Esophagus squamous epithelium (tissue), 5 donors: ENCODE measurements at regions of chr6 and their contacts with region 1.

Region 1: GRCh38 chr6:148947621-148948444 is 201.0 kb downstream of the UST start:
- DNase-seq: no peak
- H3K4me3 ChIP-seq: no peak overlapping the region
- H3K27ac ChIP-seq: no peak overlapping the region
- H3K4me1 ChIP-seq: peaks cover 0 to 23% (median 3%) of the 10 kb centered on the region in 3 donors
- H3K27me3 ChIP-seq: no peaks in the 10 kb centered on the region
- CTCF ChIP-seq: peak; percentile 78 to 92 (median 89)
- POLR2A ChIP-seq: no peak

Region 2: DNA sequence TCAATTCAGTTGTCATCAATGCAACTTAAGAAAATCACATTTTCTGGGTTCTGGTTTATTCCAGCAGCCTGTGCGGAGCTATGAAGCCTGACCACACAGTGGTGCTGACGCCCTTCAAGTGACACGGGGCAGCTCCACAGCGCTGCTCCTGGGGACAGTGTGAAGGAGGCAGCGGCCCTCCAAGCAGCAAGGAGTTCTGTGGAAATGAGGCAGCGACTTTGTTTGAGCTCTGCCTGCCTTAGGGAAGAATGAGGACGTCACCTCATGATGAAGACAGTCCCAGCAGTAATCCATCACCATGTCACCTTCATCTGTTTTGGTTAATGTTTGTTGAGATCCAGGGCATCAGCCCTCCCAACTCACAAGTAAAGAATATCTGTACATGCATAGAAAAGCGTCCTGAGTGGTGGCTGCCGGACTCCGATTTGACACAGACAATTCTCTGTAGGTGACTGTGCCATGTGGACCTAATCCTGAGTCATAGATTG is 369.5 kb before region 1 on chr6:
- intact Hi-C with region 1: loop called (anchors 10 kb)
- DNase-seq: no peak
- H3K4me3 ChIP-seq: no peak overlapping the region
- H3K27ac ChIP-seq: no peak overlapping the region
- H3K4me1 ChIP-seq: peaks cover 0 to 4% (median 0%) of the 10 kb centered on the region in 3 donors
- H3K27me3 ChIP-seq: peaks cover 0 to 15% (median 0%) of the 10 kb centered on the region in 4 donors
- CTCF ChIP-seq: peak; percentile 16 to 76 (median 66)
- POLR2A ChIP-seq: no peak

Region 3: DNA sequence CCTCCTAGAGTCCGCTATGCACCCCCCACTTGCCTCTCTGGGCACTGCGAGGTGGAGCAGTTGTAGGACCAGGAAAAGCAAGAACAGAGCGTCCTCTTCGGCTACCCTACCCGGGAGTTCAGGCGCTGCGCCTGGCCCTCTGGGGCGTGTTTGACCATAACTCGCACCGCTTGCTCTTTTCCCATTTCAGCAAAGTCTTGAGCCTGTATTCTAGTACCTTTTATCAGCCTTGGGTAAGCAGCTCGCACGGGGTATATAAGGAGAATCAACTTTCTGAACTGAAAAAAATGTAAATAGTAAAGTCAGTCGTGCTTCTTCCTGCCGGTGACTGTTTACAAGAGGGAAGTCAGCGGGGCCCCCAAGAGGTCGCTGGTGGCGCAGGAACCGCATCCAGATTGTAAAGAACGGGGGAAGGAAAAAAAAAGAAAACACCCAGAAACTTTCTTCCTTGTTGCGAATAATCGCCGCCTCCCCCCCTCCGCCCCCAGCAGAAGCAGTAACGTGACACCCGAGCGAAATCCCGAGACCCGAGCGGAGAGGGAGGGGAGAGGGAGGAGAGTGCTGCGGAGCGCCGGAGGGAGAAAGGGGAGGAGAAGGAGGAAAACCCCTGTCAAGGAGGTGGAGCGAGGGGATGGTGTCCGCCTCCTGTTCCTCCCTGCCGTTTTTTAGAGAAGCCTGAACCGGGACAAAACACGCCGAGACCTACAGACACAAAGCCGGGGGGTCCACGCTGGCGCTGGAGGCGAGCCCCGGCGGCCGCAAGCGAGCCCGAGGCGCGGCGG is 201.3 kb before region 1 on chr6 and contains the start of gene UST:
- intact Hi-C with region 1: loop called (anchors 5 kb)
- DNase-seq: peak; percentile 61
- H3K4me3 ChIP-seq: peak within 1 kb of the TSS; percentile 42 to 77 (median 68)
- H3K27ac ChIP-seq: peak within 1 kb of the TSS; percentile 68 to 92 (median 82)
- H3K4me1 ChIP-seq: peaks cover 7 to 41% (median 12%) of the 10 kb centered on the region in 3 donors
- H3K27me3 ChIP-seq: peaks cover 0 to 20% (median 0%) of the 10 kb centered on the region in 4 donors
- CTCF ChIP-seq: peak; percentile 25 to 65 (median 36)
- POLR2A ChIP-seq: peak in 2 of 4 donors; percentile 33 to 48
- total RNA-seq, gene UST: 2.9 to 12.0 (median 5.7) TPM